ENCODE measurements at regions of chr21 and their contacts with region 1.

Region 1: GRCh38 chr21:34129039-34129891 is 55.9 kb downstream of the MRPS6 start:
- DNase-seq: peak; percentile 82
- H3K4me3 Mint-ChIP-seq: peak overlapping the region; percentile 53
- H3K27ac Mint-ChIP-seq: peak overlapping the region; percentile 89
- H3K4me1 Mint-ChIP-seq: peaks cover 81% of the 10 kb centered on the region
- H3K27me3 Mint-ChIP-seq: no peaks in the 10 kb centered on the region

Region 2: GRCh38 chr21:34110594-34111202 is 18.6 kb before region 1 on chr21:
- CTCF ChIA-PET with region 1: no interaction called
- POLR2A ChIA-PET with region 1: no interaction called
- DNase-seq: no peak
- H3K4me3 Mint-ChIP-seq: no peak overlapping the region
- H3K27ac Mint-ChIP-seq: no peak overlapping the region
- H3K4me1 Mint-ChIP-seq: peaks cover 47% of the 10 kb centered on the region
- H3K27me3 Mint-ChIP-seq: no peaks in the 10 kb centered on the region

Region 3: GRCh38 chr21:34143685-34144182 is 14.5 kb after region 1 on chr21:
- CTCF ChIA-PET with region 1: interaction called, 16 read pairs
- POLR2A ChIA-PET with region 1: no interaction called
- DNase-seq: no peak
- H3K4me3 Mint-ChIP-seq: no peak overlapping the region
- H3K27ac Mint-ChIP-seq: no peak overlapping the region
- H3K4me1 Mint-ChIP-seq: peaks cover 7% of the 10 kb centered on the region
- H3K27me3 Mint-ChIP-seq: no peaks in the 10 kb centered on the region

Region 4: GRCh38 chr21:34498623-34499022 is 369.4 kb after region 1 on chr21:
- CTCF ChIA-PET with region 1: no interaction called
- POLR2A ChIA-PET with region 1: no interaction called
- DNase-seq: no peak
- H3K4me3 Mint-ChIP-seq: no peak overlapping the region
- H3K27ac Mint-ChIP-seq: no peak overlapping the region
- H3K4me1 Mint-ChIP-seq: no peaks in the 10 kb centered on the region
- H3K27me3 Mint-ChIP-seq: peaks cover 10% of the 10 kb centered on the region

Measured in activated CD4-positive, alpha-beta T cell treated with anti-CD3 and anti-CD28 coated beads, Interleukin-2, amount 10 ng/mL, durations not matched to agents 7 days and 5 days (primary cell).